AG04450 (cell line): ENCODE measurements at regions of chr19 and their contacts with region 1.

Region 1: DNA sequence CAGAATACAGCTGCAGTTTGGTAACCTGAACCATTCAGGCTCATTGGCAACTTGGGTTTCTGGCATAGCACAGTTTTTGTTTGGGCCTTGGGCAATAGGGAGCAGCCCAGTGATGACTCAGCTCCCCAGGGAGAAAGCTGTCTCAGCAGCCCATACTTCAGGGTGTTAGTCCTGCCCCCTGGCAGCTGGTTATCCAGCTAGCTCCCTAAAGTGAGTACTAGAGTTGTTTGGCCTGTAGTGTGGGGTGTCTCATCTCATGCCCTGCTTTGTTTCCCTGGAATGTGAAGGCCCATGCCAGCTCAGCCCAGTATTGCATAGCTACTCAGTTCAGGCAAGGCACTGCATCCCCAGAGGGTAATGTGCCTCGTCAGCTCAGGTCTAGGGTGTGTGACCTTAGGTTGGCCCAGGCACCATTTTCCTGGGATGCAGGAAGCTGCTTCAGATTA is 18.2 kb upstream of the ZNF543 start:
- DNase-seq: peak; percentile 87
- H3K4me3 ChIP-seq: no peak overlapping the region
- H3K27ac ChIP-seq: peak overlapping the region; percentile 80
- H3K27me3 ChIP-seq: no peaks in the 10 kb centered on the region
- CTCF ChIP-seq: peak; percentile 4; the same call in 1 of the 2 replicates

Region 2: GRCh38 chr19:57317503-57317902 is 15.5 kb after region 1 on chr19:
- CTCF ChIA-PET with region 1: interaction called, 5 read pairs
- POLR2A ChIA-PET with region 1: interaction called, 10 read pairs
- DNase-seq: no peak
- H3K4me3 ChIP-seq: peak overlapping the region; percentile 36; the same call in 1 of the 2 replicates
- H3K27ac ChIP-seq: no peak overlapping the region
- H3K27me3 ChIP-seq: peaks cover 12% of the 10 kb centered on the region
- CTCF ChIP-seq: no peak